ENCODE measurements at regions of chr11 and their contacts with region 1.

Region 1: GRCh38 chr11:130979386-130979972 is 63.2 kb upstream of the SNX19 start:
- DNase-seq: peak; percentile 36
- H3K4me3 ChIP-seq: no peak overlapping the region
- H3K27ac ChIP-seq: no peak overlapping the region
- H3K4me1 ChIP-seq: no peaks in the 10 kb centered on the region
- H3K27me3 ChIP-seq: no peaks in the 10 kb centered on the region
- CTCF ChIP-seq: peak; percentile 63 to 72

Region 2: GRCh38 chr11:130918081-130918480 is 61.4 kb before region 1 on chr11:
- CTCF ChIA-PET with region 1: no interaction called
- dilution Hi-C with region 1: no loop called
- in situ Hi-C with region 1: loop called (anchors 5 to 10 kb)
- intact Hi-C with region 1: loop called (anchors 1 kb)
- DNase-seq: no peak
- H3K4me3 ChIP-seq: no peak overlapping the region
- H3K27ac ChIP-seq: no peak overlapping the region
- H3K4me1 ChIP-seq: peaks cover 13% of the 10 kb centered on the region
- H3K27me3 ChIP-seq: peaks cover 2% of the 10 kb centered on the region
- CTCF ChIP-seq: no peak

Region 3: DNA sequence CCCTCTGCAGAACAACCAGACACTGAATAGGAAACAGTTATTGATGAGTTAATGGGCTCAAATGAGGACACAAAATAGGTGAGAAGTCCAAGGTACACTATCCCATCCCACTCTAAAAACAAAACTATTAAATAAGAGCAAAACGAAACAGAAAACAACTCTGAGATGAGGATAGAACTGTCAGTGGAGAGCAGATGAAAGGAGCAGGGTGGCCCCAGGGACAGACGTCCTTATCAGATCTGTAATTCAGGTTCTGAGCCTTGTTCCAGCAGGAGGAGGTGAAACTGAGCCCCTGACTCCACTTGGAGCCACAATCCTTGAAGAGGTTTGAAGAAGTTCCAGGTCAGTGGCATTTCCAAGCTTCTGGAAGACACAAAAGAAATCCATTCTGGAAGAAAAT is 54.7 kb before region 1 on chr11:
- CTCF ChIA-PET with region 1: no interaction called
- dilution Hi-C with region 1: no loop called
- in situ Hi-C with region 1: loop called (anchors 5 to 10 kb)
- intact Hi-C with region 1: loop called (anchors 1 kb)
- DNase-seq: no peak
- H3K4me3 ChIP-seq: no peak overlapping the region
- H3K27ac ChIP-seq: no peak overlapping the region
- H3K4me1 ChIP-seq: no peaks in the 10 kb centered on the region
- H3K27me3 ChIP-seq: peaks cover 2% of the 10 kb centered on the region
- CTCF ChIP-seq: no peak

Region 4: GRCh38 chr11:131025020-131025419 is 45.5 kb after region 1 on chr11:
- CTCF ChIA-PET with region 1: no interaction called
- dilution Hi-C with region 1: no loop called
- in situ Hi-C with region 1: no loop called
- intact Hi-C with region 1: no loop called
- DNase-seq: peak; percentile 49
- H3K4me3 ChIP-seq: no peak overlapping the region
- H3K27ac ChIP-seq: no peak overlapping the region
- H3K4me1 ChIP-seq: peaks cover 3% of the 10 kb centered on the region
- H3K27me3 ChIP-seq: no peaks in the 10 kb centered on the region
- CTCF ChIP-seq: peak; percentile 84 to 88

Region 5: GRCh38 chr11:131370090-131370751 is 390.7 kb after region 1 on chr11 and contains the start of gene NTM:
- CTCF ChIA-PET with region 1: no interaction called
- dilution Hi-C with region 1: no loop called
- in situ Hi-C with region 1: no loop called
- intact Hi-C with region 1: no loop called
- DNase-seq: peak; percentile 17
- H3K4me3 ChIP-seq: no peak within 1 kb of the TSS
- H3K27ac ChIP-seq: no peak within 1 kb of the TSS
- H3K4me1 ChIP-seq: no peaks in the 10 kb centered on the region
- H3K27me3 ChIP-seq: peaks cover 12% of the 10 kb centered on the region
- CTCF ChIP-seq: no peak
- total RNA-seq, gene NTM: 61.9 to 105 TPM